A673 (cell line): ENCODE measurements at regions of chr1 and their contacts with region 1.

Region 1: DNA sequence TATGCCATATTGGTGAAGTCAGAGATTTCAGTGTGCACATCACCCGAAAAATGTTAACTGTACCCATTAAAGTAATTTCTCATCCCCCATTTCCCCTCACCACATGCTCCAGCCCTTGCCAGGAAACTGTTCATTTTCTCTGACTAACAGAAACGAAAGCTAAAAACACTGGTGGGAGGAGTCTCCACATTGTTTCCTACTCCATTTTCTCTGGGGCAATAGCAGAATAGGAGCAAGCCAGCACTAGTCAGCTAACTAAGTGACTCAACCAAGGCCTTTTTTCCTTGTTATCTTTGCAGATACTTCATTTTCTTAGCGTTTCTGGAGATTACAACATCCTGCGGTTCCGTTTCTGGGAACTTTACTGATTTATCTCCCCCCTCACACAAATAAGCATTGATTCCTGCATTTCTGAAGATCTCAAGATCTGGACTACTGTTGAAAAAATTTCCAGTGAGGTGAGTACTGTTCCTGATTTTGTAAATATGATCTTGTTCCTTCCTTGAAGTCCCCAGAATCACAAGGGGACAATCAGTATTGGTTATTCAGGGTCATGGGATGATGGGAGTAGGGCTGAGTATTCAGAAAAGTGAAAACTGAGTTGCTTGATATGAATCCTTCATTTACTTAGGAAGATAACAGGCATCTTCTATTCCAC is at the start of gene IFI16:
- DNase-seq: peak; percentile 89
- H3K4me3 ChIP-seq: peak within 1 kb of the TSS; percentile 55
- H3K27ac ChIP-seq: peak within 1 kb of the TSS; percentile 81
- H3K4me1 ChIP-seq: peaks cover 28% of the 10 kb centered on the region
- H3K27me3 ChIP-seq: no peaks in the 10 kb centered on the region
- CTCF ChIP-seq: no peak
- total RNA-seq, gene IFI16: 68.1 and 87.4 TPM in 2 replicates

Region 2: GRCh38 chr1:157963713-157964112 is 1046.1 kb before region 1 on chr1:
- CTCF ChIA-PET with region 1: no interaction called
- POLR2A ChIA-PET with region 1: no interaction called
- intact Hi-C with region 1: loop called (anchors 10 kb)
- DNase-seq: peak; percentile 94
- H3K4me3 ChIP-seq: no peak overlapping the region
- H3K27ac ChIP-seq: peak overlapping the region; percentile 46
- H3K4me1 ChIP-seq: peaks cover 52% of the 10 kb centered on the region
- H3K27me3 ChIP-seq: no peaks in the 10 kb centered on the region
- CTCF ChIP-seq: peak; percentile 93

Region 3: GRCh38 chr1:158180741-158181576 is 828.9 kb before region 1 on chr1 and contains the start of gene CD1D:
- CTCF ChIA-PET with region 1: no interaction called
- POLR2A ChIA-PET with region 1: no interaction called
- intact Hi-C with region 1: loop called (anchors 10 kb)
- DNase-seq: peak; percentile 51
- H3K4me3 ChIP-seq: peak within 1 kb of the TSS; percentile 53
- H3K27ac ChIP-seq: no peak within 1 kb of the TSS
- H3K4me1 ChIP-seq: peaks cover 12% of the 10 kb centered on the region
- H3K27me3 ChIP-seq: peaks cover 10% of the 10 kb centered on the region
- CTCF ChIP-seq: no peak
- total RNA-seq, gene CD1D: 0.79 and 1.3 TPM in 2 replicates

Region 4: DNA sequence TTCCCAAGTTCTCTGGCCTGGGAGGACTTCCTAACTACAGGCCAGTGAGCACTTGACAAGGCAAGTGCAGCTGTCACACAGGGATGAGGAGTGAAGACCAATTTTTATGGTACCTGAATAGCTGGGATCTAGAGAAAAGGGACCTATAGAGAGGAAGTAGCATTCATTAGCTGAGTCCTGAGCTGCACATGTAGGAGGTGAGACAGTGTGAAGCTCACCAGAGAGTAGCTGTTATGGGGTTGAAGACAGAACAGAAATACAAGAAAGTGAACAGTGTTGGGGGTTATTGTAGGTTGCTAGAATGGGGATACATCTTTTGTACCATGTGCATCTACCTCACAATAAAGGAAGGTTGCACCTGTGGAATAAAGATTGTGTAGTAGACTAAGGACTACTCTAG is 116.2 kb before region 1 on chr1:
- CTCF ChIA-PET with region 1: no interaction called
- POLR2A ChIA-PET with region 1: no interaction called
- intact Hi-C with region 1: no loop called
- DNase-seq: no peak
- H3K4me3 ChIP-seq: no peak overlapping the region
- H3K27ac ChIP-seq: no peak overlapping the region
- H3K4me1 ChIP-seq: no peaks in the 10 kb centered on the region
- H3K27me3 ChIP-seq: peaks cover 12% of the 10 kb centered on the region
- CTCF ChIP-seq: no peak

Region 5: DNA sequence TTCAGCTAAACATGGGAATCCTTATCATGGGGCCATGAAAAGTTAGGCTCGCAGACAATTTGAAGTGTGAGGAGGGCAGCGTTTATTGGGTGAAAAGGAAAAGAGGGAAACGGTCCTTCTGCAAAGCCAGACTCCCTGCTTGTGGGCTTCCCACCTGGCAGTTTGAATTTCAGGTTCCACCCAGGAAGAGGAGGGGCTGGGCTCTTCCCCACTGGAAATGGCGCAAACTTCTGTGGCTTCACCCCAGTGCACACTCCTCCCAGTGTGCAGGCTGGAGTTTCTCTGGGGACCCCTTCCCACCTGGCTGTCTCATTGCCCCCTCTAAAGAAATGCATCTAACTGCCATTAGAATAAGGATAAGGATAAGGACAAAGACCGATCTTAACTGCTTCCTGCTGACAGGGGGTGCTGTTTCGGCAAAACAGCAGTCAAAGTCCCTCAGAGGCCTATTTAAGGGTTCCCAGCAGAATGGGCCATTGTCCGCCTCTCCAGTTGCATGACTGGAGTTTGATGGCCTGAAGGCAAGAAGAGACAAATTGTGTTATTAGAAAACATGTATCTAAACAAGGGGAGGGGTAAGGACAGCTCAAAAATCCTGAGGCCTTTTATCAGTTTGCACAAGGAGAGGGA is 46.4 kb after region 1 on chr1:
- CTCF ChIA-PET with region 1: no interaction called
- POLR2A ChIA-PET with region 1: no interaction called
- intact Hi-C with region 1: loop called (anchors 5 kb)
- DNase-seq: peak; percentile 31
- H3K4me3 ChIP-seq: no peak overlapping the region
- H3K27ac ChIP-seq: no peak overlapping the region
- H3K4me1 ChIP-seq: peaks cover 28% of the 10 kb centered on the region
- H3K27me3 ChIP-seq: peaks cover 22% of the 10 kb centered on the region
- CTCF ChIP-seq: peak; percentile 51